ENCODE measurements at regions of chr10 and their contacts with region 1.

Region 1: GRCh38 chr10:21278491-21279239 is 246.8 kb downstream of the SKIDA1 start:
- DNase-seq: peak; percentile 95
- H3K4me3 ChIP-seq: no peak overlapping the region
- H3K27ac ChIP-seq: no peak overlapping the region
- H3K4me1 ChIP-seq: peaks cover 18% of the 10 kb centered on the region
- H3K27me3 ChIP-seq: no peaks in the 10 kb centered on the region
- CTCF ChIP-seq: peak; percentile 92

Region 2: GRCh38 chr10:21030091-21030490 is 248.6 kb before region 1 on chr10:
- CTCF ChIA-PET with region 1: no interaction called
- POLR2A ChIA-PET with region 1: no interaction called
- intact Hi-C with region 1: no loop called
- DNase-seq: peak; percentile 86
- H3K4me3 ChIP-seq: no peak overlapping the region
- H3K27ac ChIP-seq: no peak overlapping the region
- H3K4me1 ChIP-seq: no peaks in the 10 kb centered on the region
- H3K27me3 ChIP-seq: no peaks in the 10 kb centered on the region
- CTCF ChIP-seq: no peak

Region 3: DNA sequence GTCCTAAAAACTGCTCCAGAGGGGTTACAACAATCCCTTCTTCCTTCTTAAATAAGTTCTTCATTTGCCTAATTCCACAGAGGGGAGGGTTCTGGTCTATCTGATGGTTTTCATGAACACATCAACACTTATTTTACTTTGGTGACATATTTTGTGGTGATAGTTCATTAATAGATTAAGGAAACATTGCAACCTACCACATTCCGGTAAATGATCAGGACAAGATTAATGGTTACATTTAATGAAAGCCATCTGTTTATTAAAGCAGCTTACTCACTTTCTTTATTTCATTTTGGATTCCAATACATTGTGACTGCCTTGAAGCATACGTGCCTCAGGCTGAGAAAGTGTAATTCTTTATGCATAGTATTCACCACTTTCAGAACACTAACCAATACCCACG is 145.8 kb after region 1 on chr10:
- CTCF ChIA-PET with region 1: interaction called, 10 read pairs
- POLR2A ChIA-PET with region 1: no interaction called
- intact Hi-C with region 1: no loop called
- DNase-seq: peak; percentile 87
- H3K4me3 ChIP-seq: no peak overlapping the region
- H3K27ac ChIP-seq: peak overlapping the region; percentile 92
- H3K4me1 ChIP-seq: peaks cover 30% of the 10 kb centered on the region
- H3K27me3 ChIP-seq: no peaks in the 10 kb centered on the region
- CTCF ChIP-seq: no peak

Region 4: DNA sequence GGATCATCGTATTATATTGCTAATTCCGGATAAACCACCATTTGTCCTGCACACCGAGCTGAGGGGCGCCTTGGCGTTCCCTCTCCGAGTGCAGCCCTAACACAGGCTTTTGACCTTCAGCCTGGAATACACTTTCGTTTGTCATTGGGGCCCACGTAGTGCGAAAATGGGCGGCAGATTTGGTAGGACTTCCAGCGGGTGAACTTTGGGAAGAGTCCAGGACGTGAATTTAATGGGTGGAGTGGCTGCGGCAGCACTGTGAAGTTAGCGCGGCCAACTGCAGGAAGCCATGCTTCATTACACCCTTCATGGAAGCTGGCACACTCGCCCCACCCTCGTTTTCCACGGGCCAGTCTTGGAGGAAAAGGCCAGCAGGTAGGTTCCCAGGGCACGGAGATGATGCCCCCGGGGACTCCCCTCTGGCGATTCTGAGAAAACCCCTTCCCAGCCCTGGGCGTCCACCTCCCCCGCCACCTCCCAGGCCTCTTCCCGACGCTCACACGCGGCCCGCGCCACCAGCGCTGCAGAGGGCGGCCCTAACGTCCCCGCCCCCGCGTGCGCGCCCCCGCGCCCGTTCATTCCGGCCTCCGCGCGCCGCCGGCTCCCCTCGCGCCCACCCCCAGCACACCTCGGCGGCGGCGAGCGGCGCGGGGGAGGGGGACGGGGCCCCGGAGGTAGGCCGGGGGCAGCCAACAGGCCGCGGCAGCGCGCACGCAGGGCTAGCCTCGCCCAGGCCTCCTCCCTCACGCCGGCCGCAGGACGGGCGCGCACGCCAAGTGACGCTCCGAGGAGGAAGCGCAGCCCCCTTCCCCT is 255.0 kb after region 1 on chr10 and contains the start of gene MLLT10:
- CTCF ChIA-PET with region 1: no interaction called
- POLR2A ChIA-PET with region 1: no interaction called
- intact Hi-C with region 1: loop called (anchors 5 kb)
- DNase-seq: peak; percentile 99
- H3K4me3 ChIP-seq: peak within 1 kb of the TSS; percentile 65
- H3K27ac ChIP-seq: peak within 1 kb of the TSS; percentile 96
- H3K4me1 ChIP-seq: peaks cover 41% of the 10 kb centered on the region
- H3K27me3 ChIP-seq: no peaks in the 10 kb centered on the region
- CTCF ChIP-seq: no peak
- total RNA-seq, gene MLLT10: 58.4 and 60.0 TPM in 2 replicates

Region 5: DNA sequence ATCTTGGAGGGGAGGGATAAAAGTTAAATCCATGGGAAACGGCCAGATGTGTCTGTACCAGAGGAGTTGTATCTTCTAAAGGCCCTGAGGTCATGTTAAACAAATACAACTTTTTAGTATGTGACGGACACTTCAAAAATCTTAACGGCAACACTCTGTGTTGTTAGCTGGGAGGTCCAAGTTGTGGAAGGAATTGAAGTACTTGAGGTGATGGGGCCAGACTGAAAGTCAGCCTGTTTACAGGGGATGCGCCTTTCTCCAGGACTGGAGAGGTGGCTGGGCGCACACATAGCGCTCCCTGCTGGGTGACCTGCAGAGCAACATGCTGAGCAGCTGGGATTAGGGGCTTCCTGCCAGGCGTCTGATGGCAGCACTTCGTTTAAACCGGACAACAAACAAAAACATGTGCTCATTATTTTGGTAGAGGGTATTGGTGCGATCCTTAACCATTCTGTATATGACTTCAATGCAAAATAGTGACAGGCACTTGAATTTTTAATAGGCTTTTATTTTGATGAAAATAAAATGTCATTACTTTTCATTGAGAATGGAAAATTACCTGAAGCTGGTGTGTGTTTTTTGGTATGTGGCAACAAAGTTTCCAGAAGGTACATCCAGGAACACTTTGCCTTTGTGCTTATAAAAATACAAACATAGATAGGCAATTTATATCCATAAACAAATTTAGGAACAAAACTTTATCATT is 453.6 kb after region 1 on chr10:
- CTCF ChIA-PET with region 1: interaction called, 3 read pairs
- POLR2A ChIA-PET with region 1: no interaction called
- intact Hi-C with region 1: loop called (anchors 2 kb)
- DNase-seq: peak; percentile 88
- H3K4me3 ChIP-seq: no peak overlapping the region
- H3K27ac ChIP-seq: no peak overlapping the region
- H3K4me1 ChIP-seq: peaks cover 73% of the 10 kb centered on the region
- H3K27me3 ChIP-seq: no peaks in the 10 kb centered on the region
- CTCF ChIP-seq: peak; percentile 94

Region 6: DNA sequence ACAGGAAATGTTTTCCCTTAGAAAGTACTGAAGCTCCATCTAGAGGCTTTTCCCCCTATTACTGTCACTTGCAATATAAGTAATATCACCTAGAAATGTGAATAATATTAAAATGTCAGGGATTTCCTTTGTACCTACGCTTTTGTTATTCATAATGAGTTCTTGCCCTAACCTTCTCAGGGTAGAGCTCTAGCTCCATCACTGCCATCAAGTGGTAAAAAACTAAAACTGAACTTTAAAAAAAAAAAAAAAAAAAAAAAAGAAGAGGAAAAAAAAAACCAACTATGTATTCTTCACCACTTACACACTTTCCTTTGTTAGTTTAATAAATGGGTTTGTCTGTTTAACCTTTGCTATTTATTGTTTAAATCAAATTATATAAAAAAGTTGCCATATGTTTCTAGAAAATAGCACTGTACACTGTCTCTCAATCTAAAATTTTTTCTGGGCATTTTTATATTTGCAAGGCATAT is 675.0 kb after region 1 on chr10:
- CTCF ChIA-PET with region 1: interaction called, 6 read pairs
- POLR2A ChIA-PET with region 1: no interaction called
- intact Hi-C with region 1: loop called (anchors 2 kb)
- DNase-seq: peak; percentile 77
- H3K4me3 ChIP-seq: no peak overlapping the region
- H3K27ac ChIP-seq: no peak overlapping the region
- H3K4me1 ChIP-seq: peaks cover 18% of the 10 kb centered on the region
- H3K27me3 ChIP-seq: no peaks in the 10 kb centered on the region
- CTCF ChIP-seq: peak; percentile 62

Measured in A673 (cell line).